ENCODE measurements at regions of chr2 and their contacts with region 1.

Region 1: GRCh38 chr2:204325468-204325867 is 219.8 kb upstream of the PARD3B start:
- DNase-seq: peak; percentile 5 to 79 (median 40)
- ATAC-seq: peak; percentile 62
- H3K4me3 ChIP-seq: no peak overlapping the region
- H3K4me3 Mint-ChIP-seq: no peak overlapping the region
- H3K27ac ChIP-seq: no peak overlapping the region
- H3K27ac Mint-ChIP-seq: no peak overlapping the region
- H3K4me1 ChIP-seq: no peaks in the 10 kb centered on the region
- H3K4me1 Mint-ChIP-seq: no peaks in the 10 kb centered on the region
- H3K27me3 ChIP-seq: peaks cover 0 to 5% of the 10 kb centered on the region in 2 experiments
- H3K27me3 Mint-ChIP-seq: peaks cover 14% of the 10 kb centered on the region
- CTCF ChIP-seq: peak; percentile 83

Region 2: GRCh38 chr2:204108330-204108751 is 217.1 kb before region 1 on chr2:
- CTCF ChIA-PET with region 1: no interaction called
- POLR2A ChIA-PET with region 1: no interaction called
- intact Hi-C with region 1: loop called in 1 of 2 experiments (anchors 5 kb)
- DNase-seq: peak; percentile 14 to 81 (median 32)
- ATAC-seq: peak; percentile 71
- H3K4me3 ChIP-seq: peak overlapping the region; percentile 23
- H3K4me3 Mint-ChIP-seq: peak overlapping the region; percentile 32
- H3K27ac ChIP-seq: no peak overlapping the region
- H3K27ac Mint-ChIP-seq: peak overlapping the region; percentile 19
- H3K4me1 ChIP-seq: peaks cover 32% of the 10 kb centered on the region
- H3K4me1 Mint-ChIP-seq: peaks cover 54% of the 10 kb centered on the region
- H3K27me3 ChIP-seq: no peaks in the 10 kb centered on the region
- H3K27me3 Mint-ChIP-seq: no peaks in the 10 kb centered on the region
- CTCF ChIP-seq: peak; percentile 79

Region 3: GRCh38 chr2:205680067-205680466 is 1354.6 kb after region 1 on chr2:
- CTCF ChIA-PET with region 1: interaction called, 4 read pairs
- POLR2A ChIA-PET with region 1: no interaction called
- intact Hi-C with region 1: loop called (anchors 1 kb)
- DNase-seq: peak in 9 of 14 experiments; percentile 10 to 68 (median 22)
- ATAC-seq: no peak
- H3K4me3 ChIP-seq: no peak overlapping the region
- H3K4me3 Mint-ChIP-seq: peak overlapping the region; percentile 70
- H3K27ac ChIP-seq: no peak overlapping the region
- H3K27ac Mint-ChIP-seq: no peak overlapping the region
- H3K4me1 ChIP-seq: peaks cover 14% of the 10 kb centered on the region
- H3K4me1 Mint-ChIP-seq: peaks cover 23% of the 10 kb centered on the region
- H3K27me3 ChIP-seq: peaks cover 39 to 40% of the 10 kb centered on the region in 2 experiments
- H3K27me3 Mint-ChIP-seq: peaks cover 44% of the 10 kb centered on the region
- CTCF ChIP-seq: peak; percentile 60

Region 4: GRCh38 chr2:205814039-205814364 is 1488.5 kb after region 1 on chr2:
- CTCF ChIA-PET with region 1: no interaction called
- POLR2A ChIA-PET with region 1: no interaction called
- intact Hi-C with region 1: loop called (anchors 2 to 5 kb)
- DNase-seq: no peak
- ATAC-seq: no peak
- H3K4me3 ChIP-seq: no peak overlapping the region
- H3K4me3 Mint-ChIP-seq: no peak overlapping the region
- H3K27ac ChIP-seq: no peak overlapping the region
- H3K27ac Mint-ChIP-seq: no peak overlapping the region
- H3K4me1 ChIP-seq: no peaks in the 10 kb centered on the region
- H3K4me1 Mint-ChIP-seq: no peaks in the 10 kb centered on the region
- H3K27me3 ChIP-seq: peaks cover 0 to 4% of the 10 kb centered on the region in 2 experiments
- H3K27me3 Mint-ChIP-seq: peaks cover 25% of the 10 kb centered on the region
- CTCF ChIP-seq: no peak

Region 5: GRCh38 chr2:205925373-205926337 is 1600.2 kb after region 1 on chr2:
- CTCF ChIA-PET with region 1: no interaction called
- POLR2A ChIA-PET with region 1: no interaction called
- intact Hi-C with region 1: loop called (anchors 1 to 2 kb)
- DNase-seq: peak; percentile 46 to 80 (median 59)
- ATAC-seq: peak; percentile 76
- H3K4me3 ChIP-seq: no peak overlapping the region
- H3K4me3 Mint-ChIP-seq: no peak overlapping the region
- H3K27ac ChIP-seq: no peak overlapping the region
- H3K27ac Mint-ChIP-seq: no peak overlapping the region
- H3K4me1 ChIP-seq: peaks cover 9% of the 10 kb centered on the region
- H3K4me1 Mint-ChIP-seq: peaks cover 10% of the 10 kb centered on the region
- H3K27me3 ChIP-seq: peaks cover 20 to 26% of the 10 kb centered on the region in 2 experiments
- H3K27me3 Mint-ChIP-seq: peaks cover 68% of the 10 kb centered on the region
- CTCF ChIP-seq: peak; percentile 74

Measured in CD4-positive, alpha-beta T cell (primary cell).